ENCODE measurements at regions of chr12 and their contacts with region 1.

Region 1: GRCh38 chr12:20278276-20278675 is 90.1 kb upstream of the PDE3A start:
- DNase-seq: no peak
- ATAC-seq: no peak
- H3K4me3 ChIP-seq: peak overlapping the region in 1 of 12 donors; percentile 14
- H3K27ac ChIP-seq: peak overlapping the region in 3 of 12 donors; percentile 1 to 22 (median 6)
- H3K4me1 ChIP-seq: peaks cover 0 to 17% (median 5%) of the 10 kb centered on the region in 12 donors
- H3K27me3 ChIP-seq: no peaks in the 10 kb centered on the region
- CTCF ChIP-seq: no peak
- POLR2A ChIP-seq: no peak

Region 2: DNA sequence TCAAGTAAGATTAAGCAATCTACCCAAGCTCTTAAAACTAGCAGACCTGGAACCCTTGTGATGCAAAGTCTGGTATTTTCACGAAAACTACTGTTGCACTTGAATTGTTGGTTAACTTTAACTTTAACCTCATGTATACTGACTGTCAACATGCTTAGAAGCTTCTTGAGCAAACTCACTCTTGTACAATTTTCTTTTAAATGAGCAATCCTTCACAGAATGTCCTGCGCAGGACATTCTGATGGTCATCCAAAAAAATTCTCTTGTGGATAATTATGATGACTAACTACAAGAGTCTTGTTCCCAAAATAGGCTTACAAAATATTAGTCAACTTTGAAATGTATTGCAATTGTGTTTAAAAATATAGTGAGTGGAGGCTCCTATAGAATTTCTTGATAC is 36.1 kb after region 1 on chr12:
- intact Hi-C with region 1: loop called in 1 of 10 experiments (anchors 5 kb)
- DNase-seq: no peak
- ATAC-seq: peak; percentile 19 to 69 (median 48)
- H3K4me3 ChIP-seq: no peak overlapping the region
- H3K27ac ChIP-seq: peak overlapping the region in 2 of 12 donors; percentile 23
- H3K4me1 ChIP-seq: peaks cover 0 to 19% (median 0%) of the 10 kb centered on the region in 12 donors
- H3K27me3 ChIP-seq: no peaks in the 10 kb centered on the region
- CTCF ChIP-seq: no peak
- POLR2A ChIP-seq: no peak